Ascending aorta (tissue), 2 donors: ENCODE measurements at regions of chr12 and their contacts with region 1.

Region 1: DNA sequence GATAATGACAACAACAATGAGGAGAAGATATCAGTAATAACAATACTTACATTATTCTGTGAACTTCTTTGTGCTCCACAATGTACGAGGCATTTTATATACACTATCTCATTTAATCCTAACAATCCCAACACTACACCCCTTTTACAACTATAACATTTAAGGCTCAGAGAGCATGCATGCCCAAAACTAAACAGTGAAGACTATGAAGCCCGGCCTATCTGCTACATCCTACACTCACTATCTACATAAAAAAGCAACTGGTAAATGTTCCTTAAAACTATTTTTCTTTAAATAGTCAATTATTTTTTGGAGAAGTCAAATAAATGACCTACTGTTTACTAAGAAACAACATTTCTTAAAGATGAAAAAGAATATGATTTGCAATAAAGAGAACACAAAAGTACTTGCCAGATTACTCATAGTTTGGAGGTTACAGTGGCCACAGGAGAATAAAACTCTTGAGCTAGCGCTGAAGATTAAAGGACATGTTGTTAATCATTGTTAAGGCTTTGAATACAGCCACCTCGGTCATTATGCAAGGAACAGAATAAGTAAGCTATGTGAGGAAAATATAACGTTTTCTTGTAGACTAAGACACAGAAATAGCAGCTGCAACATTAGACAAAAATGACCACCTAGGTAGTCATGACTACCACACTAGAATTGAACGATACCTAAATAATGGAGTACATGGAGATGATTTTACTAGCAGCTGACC is 56.7 kb downstream of the EPS8 start:
- DNase-seq: no peak
- H3K4me3 ChIP-seq: no peak overlapping the region
- H3K27ac ChIP-seq: peak overlapping the region; percentile 3 to 20
- H3K4me1 ChIP-seq: peaks cover 0 to 37% of the 10 kb centered on the region in 2 donors
- H3K27me3 ChIP-seq: no peaks in the 10 kb centered on the region
- CTCF ChIP-seq: no peak

Region 2: GRCh38 chr12:15662303-15662980 is 70.1 kb before region 1 on chr12:
- intact Hi-C with region 1: loop called (anchors 5 kb)
- DNase-seq: no peak
- H3K4me3 ChIP-seq: no peak overlapping the region
- H3K27ac ChIP-seq: no peak overlapping the region
- H3K4me1 ChIP-seq: no peaks in the 10 kb centered on the region
- H3K27me3 ChIP-seq: no peaks in the 10 kb centered on the region
- CTCF ChIP-seq: no peak